H1 (cell line): ENCODE measurements at regions of chr9 and their contacts with region 1.

Region 1: GRCh38 chr9:133184962-133185361 is 21.2 kb upstream of the GBGT1 start:
- DNase-seq: no peak
- H3K4me3 ChIP-seq: no peak overlapping the region
- H3K27ac ChIP-seq: no peak overlapping the region
- H3K4me1 ChIP-seq: no peaks in the 10 kb centered on the region
- H3K27me3 ChIP-seq: peaks cover 0 to 13% (median 9%) of the 10 kb centered on the region in 4 experiments; a peak in 4 of 7 replicates
- CTCF ChIP-seq: peak; percentile 9 to 58 (median 54)
- EP300 ChIP-seq: no peak
- POLR2A ChIP-seq: no peak
- RAD21 ChIP-seq: peak; percentile 46 to 62; a peak in 3 of 4 replicates

Region 2: DNA sequence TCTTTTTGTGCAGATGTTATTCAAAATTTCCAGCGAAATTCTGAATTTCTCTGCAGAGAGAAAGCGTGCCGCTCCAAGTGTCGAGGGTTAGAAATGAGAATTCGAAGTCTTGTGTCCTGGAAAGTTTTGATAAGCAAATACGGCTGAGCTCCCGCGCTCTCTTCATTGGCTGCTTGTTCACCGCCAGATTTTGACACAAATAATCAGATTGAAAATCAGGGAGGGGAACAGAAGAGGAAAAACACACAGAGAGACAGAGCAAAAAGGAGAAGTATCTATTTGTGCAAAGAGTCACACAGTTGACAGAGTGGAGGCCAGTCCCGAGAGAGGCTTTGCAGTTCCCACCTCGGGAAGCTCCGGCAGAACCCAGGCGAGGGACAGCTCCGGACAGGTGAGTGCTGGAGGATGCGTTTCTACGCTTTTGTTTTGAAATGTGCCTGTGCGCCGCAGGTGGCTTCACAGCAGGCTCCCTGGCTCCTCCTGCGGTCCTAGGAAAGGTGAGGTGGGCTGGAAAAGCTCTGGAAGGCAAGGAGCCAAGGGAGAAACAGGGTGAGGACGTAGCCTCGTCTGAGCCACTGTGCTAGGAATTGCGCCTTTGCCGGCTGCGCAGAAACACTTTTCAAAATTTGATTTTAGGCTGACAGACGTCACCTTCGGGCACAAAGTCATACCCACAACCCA is 206.4 kb before region 1 on chr9 and contains the start of gene GFI1B:
- CTCF ChIA-PET with region 1: no interaction called
- POLR2A ChIA-PET with region 1: no interaction called
- DNase-seq: no peak
- H3K4me3 ChIP-seq: peak within 1 kb of the TSS; percentile 7 to 53 (median 18); a peak in 5 of 8 replicates
- H3K27ac ChIP-seq: no peak within 1 kb of the TSS
- H3K4me1 ChIP-seq: peaks cover 0 to 10% (median 5%) of the 10 kb centered on the region in 4 experiments; a peak in 5 of 7 replicates
- H3K27me3 ChIP-seq: peaks cover 0 to 18% (median 11%) of the 10 kb centered on the region in 4 experiments; a peak in 6 of 7 replicates
- CTCF ChIP-seq: no peak
- EP300 ChIP-seq: no peak
- POLR2A ChIP-seq: no peak
- RAD21 ChIP-seq: no peak
- total RNA-seq, gene GFI1B: 0.09 and 0.71 TPM in 2 replicates

Region 3: GRCh38 chr9:133087429-133088145 is 97.4 kb before region 1 on chr9:
- CTCF ChIA-PET with region 1: no interaction called
- POLR2A ChIA-PET with region 1: no interaction called
- DNase-seq: no peak
- H3K4me3 ChIP-seq: no peak overlapping the region
- H3K27ac ChIP-seq: no peak overlapping the region
- H3K4me1 ChIP-seq: no peaks in the 10 kb centered on the region
- H3K27me3 ChIP-seq: peaks cover 0 to 3% (median 0%) of the 10 kb centered on the region in 4 experiments; a peak in 1 of 7 replicates
- CTCF ChIP-seq: no peak
- EP300 ChIP-seq: no peak
- POLR2A ChIP-seq: no peak
- RAD21 ChIP-seq: no peak

Region 4: DNA sequence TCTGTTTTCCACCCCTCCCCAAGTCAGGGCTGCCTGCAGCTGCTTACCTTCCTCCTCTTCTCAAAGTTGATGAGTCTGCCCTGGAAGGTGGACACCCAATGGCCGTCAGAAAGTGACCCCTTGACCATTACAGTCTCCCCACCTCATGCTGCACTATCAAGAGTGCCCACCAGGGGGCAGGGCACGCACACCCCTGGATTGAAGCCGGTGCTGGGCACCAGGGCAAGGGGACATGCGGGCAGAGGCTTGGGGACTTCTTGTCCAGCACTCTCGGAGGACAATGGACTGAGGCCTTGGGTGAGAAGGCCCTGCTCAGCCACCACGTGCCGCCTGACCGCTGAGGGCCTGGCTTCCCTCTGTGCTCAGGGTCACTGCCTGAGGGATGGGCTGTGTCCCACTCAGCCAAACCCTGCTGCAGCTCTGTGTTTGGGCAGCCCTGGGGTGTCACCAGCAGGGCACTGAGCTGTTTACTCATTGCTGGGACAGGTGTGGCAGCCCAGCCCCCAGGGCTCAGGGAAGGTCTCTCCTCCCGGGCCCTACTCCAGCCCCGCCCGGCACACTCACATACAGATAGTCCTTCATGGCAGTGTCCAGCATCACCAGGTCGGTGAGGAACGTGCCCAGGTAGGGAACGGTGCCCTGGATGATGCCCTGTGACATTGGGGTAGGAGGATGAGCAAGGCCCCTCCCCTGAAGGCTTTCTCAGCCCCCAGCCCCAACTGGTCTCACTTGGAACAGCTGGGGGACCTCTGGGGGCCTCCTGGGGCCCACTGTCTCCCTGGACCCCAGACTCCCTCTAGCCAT is 81.6 kb before region 1 on chr9:
- CTCF ChIA-PET with region 1: interaction called, 10 read pairs
- POLR2A ChIA-PET with region 1: no interaction called
- DNase-seq: peak in 1 of 2 experiments; percentile 93
- H3K4me3 ChIP-seq: no peak overlapping the region
- H3K27ac ChIP-seq: no peak overlapping the region
- H3K4me1 ChIP-seq: peaks cover 0 to 8% (median 3%) of the 10 kb centered on the region in 4 experiments; a peak in 3 of 7 replicates
- H3K27me3 ChIP-seq: no peaks in the 10 kb centered on the region
- CTCF ChIP-seq: peak in 2 of 3 experiments; percentile 92 to 94; a peak in 3 of 4 replicates
- EP300 ChIP-seq: no peak
- POLR2A ChIP-seq: no peak
- RAD21 ChIP-seq: peak; percentile 91 to 92

Region 5: DNA sequence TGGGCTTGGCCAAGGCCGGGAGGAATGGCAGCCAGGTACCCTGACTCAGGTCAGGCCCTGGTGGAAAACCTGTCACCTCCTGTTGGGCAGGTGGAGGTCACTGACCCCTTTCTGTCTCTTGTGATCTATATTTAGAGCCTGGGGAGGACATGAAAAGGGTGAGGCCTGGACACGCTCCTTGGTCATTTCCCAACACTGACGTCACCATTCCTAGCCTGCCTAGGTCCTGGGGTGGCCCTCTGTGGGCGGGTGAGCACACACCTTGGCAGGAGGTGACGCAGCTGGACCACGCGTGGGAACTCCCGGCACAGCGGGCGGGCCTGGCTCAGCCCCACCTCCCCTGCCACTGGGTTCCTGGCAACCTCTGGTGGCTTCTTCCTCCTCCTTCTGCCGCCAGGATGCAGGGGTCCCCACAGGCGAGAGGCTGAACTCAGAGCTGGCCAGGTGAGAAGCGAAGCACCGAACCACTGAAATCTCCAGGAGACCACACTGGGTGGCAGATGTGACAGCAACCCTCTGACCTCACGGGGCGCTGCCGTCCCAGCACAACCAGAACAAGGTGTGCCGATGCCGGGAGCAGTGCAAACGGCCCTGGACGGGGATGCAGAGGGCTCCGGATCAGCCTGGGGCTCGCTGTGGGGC is 57.5 kb before region 1 on chr9:
- CTCF ChIA-PET with region 1: no interaction called
- POLR2A ChIA-PET with region 1: no interaction called
- DNase-seq: no peak
- H3K4me3 ChIP-seq: no peak overlapping the region
- H3K27ac ChIP-seq: no peak overlapping the region
- H3K4me1 ChIP-seq: peaks cover 0 to 3% (median 0%) of the 10 kb centered on the region in 4 experiments; a peak in 1 of 7 replicates
- H3K27me3 ChIP-seq: peaks cover 0 to 5% (median under 1%) of the 10 kb centered on the region in 4 experiments; a peak in 2 of 7 replicates
- CTCF ChIP-seq: no peak
- EP300 ChIP-seq: no peak
- POLR2A ChIP-seq: no peak
- RAD21 ChIP-seq: no peak

Region 6: DNA sequence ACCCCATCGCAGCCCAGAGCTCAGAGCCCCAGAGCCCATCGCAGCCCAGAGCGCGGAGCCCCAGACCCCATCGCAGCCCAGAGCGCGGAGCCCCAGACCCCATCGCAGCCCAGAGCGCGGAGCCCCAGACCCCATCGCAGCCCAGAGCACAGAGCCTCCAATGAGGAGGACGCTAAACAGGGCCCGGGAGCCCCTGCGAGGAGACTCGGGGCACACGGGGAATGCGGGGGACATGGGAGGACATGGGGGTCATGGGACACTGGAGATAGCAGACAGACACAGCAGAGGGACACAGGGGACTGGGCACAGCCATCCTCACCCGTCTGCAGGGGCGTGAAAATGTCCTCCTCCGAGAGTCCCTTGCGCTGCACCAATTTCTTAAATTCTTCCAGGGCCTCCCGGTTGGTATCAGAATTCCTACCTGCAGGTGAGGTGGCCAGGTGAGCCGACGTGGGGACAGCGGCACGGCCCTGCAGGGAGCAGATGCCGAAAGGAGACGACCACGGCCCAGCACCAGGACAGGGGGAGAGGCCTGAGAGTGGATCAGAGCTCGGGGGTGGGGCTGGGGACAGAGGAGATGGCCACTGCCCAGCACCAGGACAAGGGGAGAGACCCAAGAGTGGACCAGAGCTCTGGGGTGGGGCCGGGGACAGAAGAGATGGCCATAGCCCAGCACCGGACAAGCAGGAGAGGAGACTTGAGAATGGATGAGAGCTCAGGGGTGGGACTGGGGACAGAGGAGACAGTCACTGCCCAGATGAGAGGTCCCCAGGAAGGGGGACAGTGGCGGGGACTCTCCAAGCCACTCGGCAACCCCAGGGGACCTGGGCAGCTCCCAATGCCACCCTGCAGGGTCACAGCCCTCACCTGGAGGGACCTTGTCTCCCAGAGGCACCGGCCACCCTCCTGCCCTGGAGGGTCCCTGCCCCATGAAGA is 21.3 kb after region 1 on chr9:
- CTCF ChIA-PET with region 1: interaction called, 38 read pairs
- POLR2A ChIA-PET with region 1: no interaction called
- DNase-seq: no peak
- H3K4me3 ChIP-seq: no peak overlapping the region
- H3K27ac ChIP-seq: no peak overlapping the region
- H3K4me1 ChIP-seq: no peaks in the 10 kb centered on the region
- H3K27me3 ChIP-seq: peaks cover 10 to 58% (median 40%) of the 10 kb centered on the region in 4 experiments
- CTCF ChIP-seq: no peak
- EP300 ChIP-seq: no peak
- POLR2A ChIP-seq: no peak
- RAD21 ChIP-seq: no peak

Region 7: DNA sequence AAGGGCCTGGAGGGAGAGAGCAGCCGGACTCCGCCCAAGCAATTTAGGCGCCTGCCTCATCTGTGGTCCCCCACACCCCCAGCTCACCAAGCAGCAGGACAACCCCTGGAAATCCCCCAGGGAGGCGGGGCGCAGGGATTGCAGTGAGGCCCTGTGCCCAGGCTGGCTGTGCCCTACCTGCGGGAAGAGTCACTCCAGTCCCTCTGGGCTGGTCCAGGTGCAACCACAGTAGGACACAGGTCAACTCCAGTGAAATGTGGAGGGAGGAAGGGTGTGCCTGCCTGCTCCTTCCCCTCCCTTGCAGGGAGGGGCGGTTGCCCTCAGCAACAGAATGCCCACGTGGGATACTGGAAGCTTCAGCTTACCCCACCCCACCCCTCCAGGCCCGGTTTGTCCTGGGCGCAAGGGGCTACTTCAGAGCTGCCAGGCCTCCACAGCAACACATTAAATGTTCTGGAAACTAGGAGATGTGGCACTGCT is 67.4 kb after region 1 on chr9:
- CTCF ChIA-PET with region 1: interaction called, 14 read pairs
- POLR2A ChIA-PET with region 1: no interaction called
- DNase-seq: peak in 1 of 2 experiments; percentile 38
- H3K4me3 ChIP-seq: no peak overlapping the region
- H3K27ac ChIP-seq: no peak overlapping the region
- H3K4me1 ChIP-seq: peaks cover 0 to 4% (median 0%) of the 10 kb centered on the region in 4 experiments; a peak in 1 of 7 replicates
- H3K27me3 ChIP-seq: 0 out of 7 replicates have a peak, but pooled peaks cover 0 to 2% (median 0%) of the 10 kb centered on the region in 4 experiments
- CTCF ChIP-seq: no peak
- EP300 ChIP-seq: no peak
- POLR2A ChIP-seq: no peak
- RAD21 ChIP-seq: no peak

Region 8: GRCh38 chr9:133320421-133320881 is 135.5 kb after region 1 on chr9:
- CTCF ChIA-PET with region 1: interaction called, 16 read pairs
- POLR2A ChIA-PET with region 1: no interaction called
- DNase-seq: no peak
- H3K4me3 ChIP-seq: no peak overlapping the region
- H3K27ac ChIP-seq: no peak overlapping the region
- H3K4me1 ChIP-seq: no peaks in the 10 kb centered on the region
- H3K27me3 ChIP-seq: no peaks in the 10 kb centered on the region
- CTCF ChIP-seq: peak; percentile 18 to 52 (median 38)
- EP300 ChIP-seq: no peak
- POLR2A ChIP-seq: no peak
- RAD21 ChIP-seq: peak; percentile 20 to 29; a peak in 3 of 4 replicates

Region 9: DNA sequence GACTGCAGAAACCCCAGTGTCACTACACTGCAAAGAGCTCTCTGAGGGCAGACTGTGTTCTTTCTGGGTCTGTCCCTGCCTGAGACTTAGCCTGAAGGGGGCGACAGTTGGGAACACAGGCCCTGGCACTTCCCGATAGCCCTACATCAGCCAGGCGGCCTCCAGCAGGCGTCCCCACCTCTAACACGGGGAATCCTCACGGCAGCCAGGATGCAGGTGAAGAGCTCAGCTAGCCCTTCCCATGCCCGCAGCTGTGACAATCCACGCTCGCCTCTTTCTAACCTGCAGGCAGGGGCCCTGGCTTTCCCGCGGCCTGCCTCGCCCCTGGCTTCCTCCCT is 157.1 kb after region 1 on chr9:
- CTCF ChIA-PET with region 1: interaction called, 45 read pairs
- POLR2A ChIA-PET with region 1: no interaction called
- DNase-seq: peak in 1 of 2 experiments; percentile 76
- H3K4me3 ChIP-seq: no peak overlapping the region
- H3K27ac ChIP-seq: no peak overlapping the region
- H3K4me1 ChIP-seq: peaks cover 0 to 7% (median 5%) of the 10 kb centered on the region in 4 experiments; a peak in 5 of 7 replicates
- H3K27me3 ChIP-seq: no peaks in the 10 kb centered on the region
- CTCF ChIP-seq: peak in 2 of 3 experiments; percentile 81 to 86; a peak in 3 of 4 replicates
- EP300 ChIP-seq: no peak
- POLR2A ChIP-seq: no peak
- RAD21 ChIP-seq: peak; percentile 19 to 33; a peak in 3 of 4 replicates